CD4-positive, alpha-beta T cell (primary cell): ENCODE measurements at regions of chr5 and their contacts with region 1.

Region 1: DNA sequence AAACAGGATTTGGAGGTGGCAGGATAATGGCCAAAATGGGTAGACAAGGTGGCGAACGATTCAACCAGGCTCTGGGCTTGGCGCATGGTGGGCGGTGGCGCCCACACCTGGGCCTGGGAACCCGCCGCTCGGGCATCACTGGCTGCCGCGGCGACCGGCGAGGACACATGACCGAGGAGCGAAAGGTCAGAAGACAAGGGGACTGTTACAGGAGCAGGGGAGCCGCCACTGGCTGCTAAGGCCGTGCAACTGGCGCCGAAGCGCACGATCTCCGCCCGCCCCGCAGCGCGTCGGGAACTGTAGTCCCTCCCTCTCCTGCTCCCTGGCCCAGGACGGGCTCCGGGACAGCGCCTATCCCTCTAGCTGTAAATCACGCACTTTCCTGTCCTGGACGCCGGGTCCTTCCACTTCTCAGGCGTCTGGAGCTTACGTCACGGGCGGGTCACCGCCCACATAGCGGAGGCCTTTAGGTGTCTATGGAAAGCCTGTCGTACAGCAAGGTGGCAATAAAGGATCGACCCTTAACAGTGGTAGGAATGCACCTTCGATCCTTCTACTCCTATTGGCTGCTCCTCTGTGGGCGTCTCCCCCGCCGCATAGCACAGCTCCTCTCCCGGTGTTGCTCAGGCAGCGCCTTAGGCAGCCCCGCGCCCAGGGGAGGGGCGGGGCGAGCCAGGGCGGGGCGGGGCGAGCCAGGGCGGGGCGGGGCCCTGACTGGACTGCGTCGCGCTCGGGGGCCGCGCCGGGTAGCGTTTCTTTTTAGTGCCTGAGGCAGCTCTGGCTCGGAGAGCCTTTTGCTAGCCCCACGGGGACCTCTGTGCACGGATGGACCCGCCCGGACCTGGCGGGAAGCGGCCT is at the start of gene ICE1:
- DNase-seq: peak; percentile 88 to 98 (median 94)
- ATAC-seq: peak; percentile 87
- H3K4me3 ChIP-seq: peak within 1 kb of the TSS; percentile 79
- H3K4me3 Mint-ChIP-seq: peak within 1 kb of the TSS; percentile 98
- H3K27ac ChIP-seq: peak within 1 kb of the TSS; percentile 94 to 97
- H3K27ac Mint-ChIP-seq: no peak within 1 kb of the TSS
- H3K4me1 ChIP-seq: peaks cover 31% of the 10 kb centered on the region
- H3K4me1 Mint-ChIP-seq: peaks cover 26% of the 10 kb centered on the region
- H3K27me3 ChIP-seq: no peaks in the 10 kb centered on the region
- H3K27me3 Mint-ChIP-seq: no peaks in the 10 kb centered on the region
- CTCF ChIP-seq: no peak
- total RNA-seq, gene ICE1: 37.6 to 39.1 TPM

Region 2: DNA sequence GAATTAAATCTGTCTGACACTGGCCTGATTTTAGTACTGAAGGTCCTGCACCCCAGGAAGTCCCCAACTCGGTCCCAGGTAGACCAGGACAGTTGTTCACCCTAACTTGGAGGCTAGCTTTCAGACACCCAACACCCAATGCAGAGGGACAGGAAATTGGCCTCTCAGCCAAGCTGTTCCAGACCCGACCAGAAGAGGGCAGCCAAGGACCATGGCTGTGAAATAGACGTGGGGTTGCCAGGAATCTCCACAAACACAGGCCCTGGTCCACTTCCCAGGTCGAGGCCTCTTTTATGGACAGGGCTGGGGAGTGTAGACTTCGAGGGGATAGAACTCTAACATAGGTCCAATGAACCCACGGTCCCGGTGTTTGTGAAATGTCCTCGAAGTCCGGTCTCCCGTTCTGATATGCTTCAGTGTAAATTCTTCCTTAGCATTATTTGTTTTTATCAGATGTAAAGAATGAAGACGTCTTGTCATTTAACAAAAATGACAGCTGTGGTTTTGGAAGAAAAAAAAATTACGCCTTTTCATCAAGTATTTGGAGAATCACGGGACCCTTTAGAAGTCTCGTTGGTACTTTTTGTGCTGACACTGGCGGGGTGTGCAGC is 542.4 kb before region 1 on chr5:
- CTCF ChIA-PET with region 1: no interaction called
- POLR2A ChIA-PET with region 1: no interaction called
- intact Hi-C with region 1: no loop called
- DNase-seq: peak in 6 of 14 experiments; percentile 7 to 35 (median 16)
- ATAC-seq: no peak
- H3K4me3 ChIP-seq: no peak overlapping the region
- H3K4me3 Mint-ChIP-seq: no peak overlapping the region
- H3K27ac ChIP-seq: no peak overlapping the region
- H3K27ac Mint-ChIP-seq: no peak overlapping the region
- H3K4me1 ChIP-seq: no peaks in the 10 kb centered on the region
- H3K4me1 Mint-ChIP-seq: no peaks in the 10 kb centered on the region
- H3K27me3 ChIP-seq: no peaks in the 10 kb centered on the region
- H3K27me3 Mint-ChIP-seq: no peaks in the 10 kb centered on the region
- CTCF ChIP-seq: peak; percentile 46

Region 3: DNA sequence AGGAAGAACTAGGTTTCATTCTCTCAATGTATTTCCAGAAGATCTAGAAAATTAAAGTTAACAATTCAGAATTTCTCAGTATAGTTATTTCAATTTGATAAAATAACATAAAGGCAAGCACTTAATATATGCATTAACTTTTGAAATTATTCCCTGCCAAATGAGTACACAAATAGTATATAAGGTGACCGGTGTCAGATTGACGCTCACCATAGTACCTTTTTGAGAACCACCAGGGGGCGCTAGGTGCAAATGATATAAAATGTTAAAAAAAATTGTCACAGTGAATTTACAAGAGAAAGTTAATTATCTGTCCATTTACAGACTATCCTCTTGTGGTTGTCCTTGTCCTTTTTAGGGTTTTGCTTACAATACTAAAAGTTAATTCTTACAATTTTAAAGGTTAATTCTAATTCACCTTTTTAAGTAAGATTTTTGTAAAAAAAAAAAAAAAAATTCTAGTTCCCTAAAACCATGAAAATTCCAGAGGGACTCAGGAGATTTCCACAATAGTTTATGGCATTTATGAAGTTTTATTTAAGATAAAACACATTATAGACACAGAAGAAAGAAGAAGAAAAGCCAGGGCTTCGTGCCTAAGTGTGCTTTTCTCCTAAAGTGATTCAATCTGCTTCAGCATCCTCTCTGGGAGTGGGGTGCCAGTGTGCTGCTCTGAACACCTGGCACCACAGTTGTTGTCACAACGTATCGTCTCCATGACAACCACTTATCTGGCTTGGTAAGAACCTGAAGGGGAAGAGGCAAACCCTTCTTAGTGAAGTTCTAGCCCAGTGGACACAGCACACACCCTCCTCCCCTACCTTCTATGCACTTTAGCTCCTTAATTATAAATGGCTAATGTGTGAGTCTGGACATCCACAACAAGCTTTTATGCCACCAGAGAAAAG is 280.3 kb before region 1 on chr5:
- CTCF ChIA-PET with region 1: no interaction called
- POLR2A ChIA-PET with region 1: interaction called, 5 read pairs
- intact Hi-C with region 1: loop called in 1 of 2 experiments (anchors 1 kb)
- DNase-seq: peak in 13 of 14 experiments; percentile 4 to 70 (median 40)
- ATAC-seq: no peak
- H3K4me3 ChIP-seq: no peak overlapping the region
- H3K4me3 Mint-ChIP-seq: no peak overlapping the region
- H3K27ac ChIP-seq: no peak overlapping the region
- H3K27ac Mint-ChIP-seq: no peak overlapping the region
- H3K4me1 ChIP-seq: no peaks in the 10 kb centered on the region
- H3K4me1 Mint-ChIP-seq: peaks cover 9% of the 10 kb centered on the region
- H3K27me3 ChIP-seq: peaks cover 3 to 12% of the 10 kb centered on the region in 2 experiments
- H3K27me3 Mint-ChIP-seq: peaks cover 47% of the 10 kb centered on the region
- CTCF ChIP-seq: peak; percentile 75

Region 4: DNA sequence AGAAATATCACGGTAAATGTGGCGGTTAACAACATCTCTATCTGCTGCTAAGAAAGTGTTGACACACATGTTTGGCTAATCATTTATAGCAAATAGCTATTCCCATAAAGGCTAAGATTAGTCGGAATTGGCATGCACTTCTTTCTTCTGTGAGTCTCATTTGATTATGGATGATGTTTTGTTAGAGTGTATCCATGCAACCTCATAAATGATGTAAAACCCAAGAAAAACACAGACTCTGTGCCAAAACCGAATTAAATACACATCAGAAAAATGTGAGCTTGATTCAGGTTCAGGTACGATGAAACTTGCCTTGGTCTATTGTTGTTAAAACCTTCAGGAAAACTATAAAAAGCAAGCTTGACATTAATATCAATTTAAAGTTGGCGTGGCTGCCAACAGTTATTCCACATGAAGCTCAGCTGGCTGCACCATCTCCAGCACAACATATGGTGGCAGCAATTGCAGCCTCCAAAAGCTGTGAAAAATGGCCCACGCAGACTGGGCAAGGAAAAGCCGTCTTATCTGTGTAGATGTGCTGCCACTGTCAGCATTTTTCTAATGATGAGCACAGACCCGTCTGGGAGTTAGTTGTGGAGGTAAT is 40.8 kb before region 1 on chr5:
- CTCF ChIA-PET with region 1: no interaction called
- POLR2A ChIA-PET with region 1: no interaction called
- intact Hi-C with region 1: no loop called
- DNase-seq: no peak
- ATAC-seq: no peak
- H3K4me3 ChIP-seq: no peak overlapping the region
- H3K4me3 Mint-ChIP-seq: no peak overlapping the region
- H3K27ac ChIP-seq: no peak overlapping the region
- H3K27ac Mint-ChIP-seq: no peak overlapping the region
- H3K4me1 ChIP-seq: no peaks in the 10 kb centered on the region
- H3K4me1 Mint-ChIP-seq: no peaks in the 10 kb centered on the region
- H3K27me3 ChIP-seq: no peaks in the 10 kb centered on the region
- H3K27me3 Mint-ChIP-seq: no peaks in the 10 kb centered on the region
- CTCF ChIP-seq: no peak

Region 5: DNA sequence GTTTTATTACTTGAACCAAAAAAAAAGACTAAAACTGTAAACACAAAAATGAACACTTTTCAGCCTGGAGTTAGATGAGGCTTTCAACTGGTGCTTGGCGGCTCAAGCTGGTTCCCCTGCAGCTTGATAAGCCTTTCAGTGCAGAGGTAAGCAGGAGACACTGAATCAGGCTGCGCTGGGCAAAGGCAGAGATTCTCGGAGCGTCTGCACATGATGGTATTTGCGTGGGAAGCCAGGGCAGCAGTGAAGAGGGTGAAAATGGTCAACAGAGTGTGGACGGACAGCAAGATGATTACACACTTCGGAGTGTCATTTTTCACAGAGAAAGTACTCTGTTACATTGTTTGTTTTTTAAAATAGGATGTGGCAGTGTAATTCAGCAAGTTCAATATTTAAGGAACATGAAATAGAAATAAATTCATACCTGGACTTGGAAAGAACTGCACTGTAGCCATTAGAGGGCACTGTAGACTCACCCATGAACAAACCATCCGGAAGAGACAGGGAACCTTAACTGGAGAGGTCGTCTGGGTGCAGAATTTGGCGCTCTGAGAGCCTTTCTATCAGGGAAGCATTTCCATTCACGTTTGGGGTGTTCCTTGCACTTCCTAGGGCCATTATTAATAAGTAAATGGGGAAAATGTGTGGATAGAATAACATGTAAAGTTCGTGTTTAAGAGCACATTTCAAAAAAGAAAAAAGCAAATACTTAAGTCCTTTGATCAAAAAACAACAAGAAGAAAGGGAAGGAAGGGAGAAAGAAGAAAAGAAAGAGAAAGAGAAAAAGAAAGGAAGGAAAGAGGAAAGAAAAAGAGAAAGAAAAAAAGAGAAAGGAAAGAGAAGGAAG is 70.1 kb after region 1 on chr5:
- CTCF ChIA-PET with region 1: no interaction called
- POLR2A ChIA-PET with region 1: interaction called, 7 read pairs
- intact Hi-C with region 1: loop called in 1 of 2 experiments (anchors 5 kb)
- DNase-seq: peak in 10 of 14 experiments; percentile 8 to 81 (median 28)
- ATAC-seq: peak; percentile 41
- H3K4me3 ChIP-seq: no peak overlapping the region
- H3K4me3 Mint-ChIP-seq: peak overlapping the region; percentile 69
- H3K27ac ChIP-seq: no peak overlapping the region
- H3K27ac Mint-ChIP-seq: no peak overlapping the region
- H3K4me1 ChIP-seq: peaks cover 21% of the 10 kb centered on the region
- H3K4me1 Mint-ChIP-seq: peaks cover 18% of the 10 kb centered on the region
- H3K27me3 ChIP-seq: no peaks in the 10 kb centered on the region
- H3K27me3 Mint-ChIP-seq: peaks cover 16% of the 10 kb centered on the region
- CTCF ChIP-seq: peak; percentile 64

Region 6: GRCh38 chr5:6632917-6633468 is 1210.8 kb after region 1 on chr5 and contains the starts of genes NSUN2 and SRD5A1:
- CTCF ChIA-PET with region 1: no interaction called
- POLR2A ChIA-PET with region 1: interaction called, 14 read pairs
- intact Hi-C with region 1: loop called (anchors 2 to 5 kb)
- DNase-seq: peak; percentile 78 to 97 (median 90)
- ATAC-seq: peak; percentile 88
- H3K4me3 ChIP-seq: peak within 1 kb of the TSS; percentile 87
- H3K4me3 Mint-ChIP-seq: peak within 1 kb of the TSS; percentile 90
- H3K27ac ChIP-seq: peak within 1 kb of the TSS; percentile 62 to 98
- H3K27ac Mint-ChIP-seq: peak within 1 kb of the TSS; percentile 93
- H3K4me1 ChIP-seq: peaks cover 33% of the 10 kb centered on the region
- H3K4me1 Mint-ChIP-seq: peaks cover 53% of the 10 kb centered on the region
- H3K27me3 ChIP-seq: no peaks in the 10 kb centered on the region
- H3K27me3 Mint-ChIP-seq: no peaks in the 10 kb centered on the region
- CTCF ChIP-seq: no peak
- total RNA-seq, gene NSUN2: 48.3 to 50.8 TPM
- total RNA-seq, gene SRD5A1: 2.3 to 3.0 TPM

Region 7: DNA sequence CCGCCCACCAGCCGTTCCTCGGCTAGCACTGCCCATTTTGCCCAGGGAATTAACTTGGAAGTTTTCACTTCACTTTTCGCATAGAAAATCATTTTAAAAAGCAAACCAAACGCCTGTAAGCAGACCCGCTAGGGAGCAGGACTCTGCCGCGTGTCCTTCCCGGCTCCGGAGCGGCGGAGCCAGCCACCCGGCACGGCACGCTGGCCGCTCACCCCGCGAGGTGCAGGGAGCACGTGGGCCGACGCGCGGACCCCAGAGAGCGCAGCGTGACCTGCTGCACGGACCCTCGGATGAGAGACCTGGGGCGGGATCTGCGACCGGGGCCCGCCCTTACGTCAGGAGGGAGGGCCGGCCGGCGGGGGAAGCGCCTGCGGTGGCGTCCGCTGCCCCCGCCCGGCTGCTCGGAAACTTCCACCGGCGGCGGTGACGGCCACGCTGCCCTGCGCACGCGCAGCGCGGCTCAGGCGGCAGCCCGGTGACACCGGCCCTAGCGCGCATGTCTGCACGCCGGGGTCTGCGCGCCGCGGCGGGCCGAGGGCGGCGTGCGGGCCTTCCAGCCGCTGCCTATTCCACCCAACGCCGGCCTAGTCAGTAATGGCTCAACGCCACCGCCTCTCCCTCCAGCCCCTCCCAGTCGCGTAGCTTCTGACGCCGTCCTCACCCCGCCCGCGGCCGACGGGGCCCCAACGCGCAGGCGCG is 1290.5 kb after region 1 on chr5:
- CTCF ChIA-PET with region 1: no interaction called
- POLR2A ChIA-PET with region 1: interaction called, 10 read pairs
- intact Hi-C with region 1: loop called in 1 of 2 experiments (anchors 1 kb)
- DNase-seq: peak in 9 of 14 experiments; percentile 94 to 99 (median 97)
- ATAC-seq: peak; percentile 71
- H3K4me3 ChIP-seq: peak overlapping the region; percentile 91
- H3K4me3 Mint-ChIP-seq: peak overlapping the region; percentile 95
- H3K27ac ChIP-seq: peak overlapping the region; percentile 72 to 84
- H3K27ac Mint-ChIP-seq: peak overlapping the region; percentile 78
- H3K4me1 ChIP-seq: peaks cover 34% of the 10 kb centered on the region
- H3K4me1 Mint-ChIP-seq: peaks cover 40% of the 10 kb centered on the region
- H3K27me3 ChIP-seq: no peaks in the 10 kb centered on the region
- H3K27me3 Mint-ChIP-seq: no peaks in the 10 kb centered on the region
- CTCF ChIP-seq: no peak